PC-3 (cell line): ENCODE measurements at regions of chr10 and their contacts with region 1.

Region 1: DNA sequence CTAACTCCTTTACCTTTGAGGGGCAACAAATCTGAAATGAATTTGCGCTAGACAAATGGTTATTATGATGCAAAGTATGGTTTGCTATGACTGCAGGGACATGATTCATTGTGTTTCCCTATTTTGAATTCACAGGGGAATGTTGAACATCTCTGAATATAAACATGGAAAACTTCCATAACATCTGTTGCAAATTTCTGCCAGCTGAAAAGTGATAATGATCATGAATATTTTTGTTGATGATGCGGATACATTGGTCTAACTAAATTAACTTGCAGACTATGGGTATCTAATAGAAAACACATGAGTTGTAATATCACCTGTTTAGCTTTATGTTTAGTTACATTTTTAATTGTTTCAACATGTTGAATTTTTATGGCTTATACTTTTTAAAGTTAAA is 1325.5 kb downstream of the REEP3 start:
- DNase-seq: no peak
- ATAC-seq: no peak
- H3K4me3 ChIP-seq: no peak overlapping the region
- H3K27ac ChIP-seq: no peak overlapping the region
- H3K4me1 ChIP-seq: no peaks in the 10 kb centered on the region; the same call in 1 of the 2 replicates
- H3K27me3 ChIP-seq: no peaks in the 10 kb centered on the region
- CTCF ChIP-seq: no peak

Region 2: DNA sequence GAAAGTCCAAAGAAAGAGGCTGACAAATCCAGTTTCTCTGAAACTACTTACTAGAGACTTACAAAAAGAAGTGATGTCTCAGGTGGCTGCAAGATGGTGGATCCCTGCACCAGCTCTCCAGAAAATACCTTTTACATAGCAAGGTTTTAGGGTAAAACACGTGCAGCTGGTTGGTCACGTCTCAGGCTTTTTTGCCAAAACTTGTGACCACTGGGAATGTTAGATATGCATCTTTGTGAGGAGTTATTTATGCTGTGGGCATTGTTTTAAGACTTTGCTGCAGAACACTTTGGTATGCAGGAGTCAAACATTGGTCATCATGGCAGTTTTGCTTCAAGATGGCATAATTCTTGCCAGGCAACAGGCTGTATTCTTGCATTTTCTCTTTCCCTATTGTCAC is 27.3 kb after region 1 on chr10:
- CTCF ChIA-PET with region 1: no interaction called
- POLR2A ChIA-PET with region 1: no interaction called
- intact Hi-C with region 1: loop called (anchors 2 kb)
- DNase-seq: no peak
- ATAC-seq: peak; percentile 12; the same call in 1 of the 2 replicates
- H3K4me3 ChIP-seq: no peak overlapping the region
- H3K27ac ChIP-seq: peak overlapping the region; percentile 40
- H3K4me1 ChIP-seq: peaks cover 14% of the 10 kb centered on the region; the same call in 1 of the 2 replicates
- H3K27me3 ChIP-seq: no peaks in the 10 kb centered on the region
- CTCF ChIP-seq: no peak